ENCODE measurements at regions of chr12 and their contacts with region 1.

Region 1: DNA sequence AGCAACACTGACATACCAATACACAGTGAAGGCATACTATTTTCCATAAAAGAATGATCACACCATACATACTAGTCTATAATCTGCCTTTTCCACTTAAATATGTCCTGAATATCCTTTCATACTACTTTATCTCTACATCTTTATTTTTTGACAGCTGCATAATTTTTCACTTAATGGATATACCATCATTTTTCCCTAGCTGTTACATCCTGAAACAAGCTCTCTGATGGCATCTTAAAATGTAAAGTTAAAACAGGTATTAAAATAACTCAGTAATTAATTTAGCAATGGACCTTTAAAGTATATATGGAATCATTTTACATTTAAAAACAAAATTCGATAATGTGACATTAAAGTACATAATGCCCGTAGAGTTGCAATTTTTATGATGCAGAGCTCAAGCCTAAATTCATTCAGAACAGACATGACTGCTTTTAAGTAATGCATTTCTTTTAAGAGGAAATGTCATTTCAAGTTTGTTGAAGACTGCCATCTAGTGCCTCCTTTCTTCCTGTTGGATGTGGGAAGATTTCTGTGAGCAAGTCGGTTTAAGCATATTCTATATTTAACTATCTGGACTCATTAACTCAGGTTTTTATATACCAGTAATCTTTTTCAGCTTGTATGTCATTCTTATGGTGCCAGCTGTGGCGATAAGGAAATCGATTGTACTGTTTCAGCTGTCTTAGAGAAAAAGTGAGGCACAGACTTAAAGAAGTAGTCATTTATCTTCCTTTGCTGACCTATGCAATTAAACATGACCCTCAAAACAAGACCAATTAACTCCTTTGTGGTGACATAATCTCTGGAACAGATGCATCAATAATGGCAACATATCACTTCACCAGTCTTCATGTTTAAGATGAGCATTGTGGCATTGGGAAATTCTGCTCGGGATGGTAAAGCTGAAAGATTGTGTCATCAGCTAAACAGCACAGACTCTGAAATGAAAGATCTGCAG is 20.3 kb downstream of the PRICKLE1 start:
- DNase-seq: no peak
- ATAC-seq: no peak
- H3K4me3 Mint-ChIP-seq: no peak overlapping the region
- H3K27ac Mint-ChIP-seq: no peak overlapping the region
- H3K4me1 Mint-ChIP-seq: no peaks in the 10 kb centered on the region
- H3K27me3 Mint-ChIP-seq: no peaks in the 10 kb centered on the region
- CTCF ChIP-seq: no peak

Region 2: GRCh38 chr12:40946612-40947194 is 1622.5 kb before region 1 on chr12:
- CTCF ChIA-PET with region 1: no interaction called
- POLR2A ChIA-PET with region 1: no interaction called
- intact Hi-C with region 1: loop called (anchors 1 kb)
- DNase-seq: no peak
- ATAC-seq: peak; percentile 25
- H3K4me3 Mint-ChIP-seq: no peak overlapping the region
- H3K27ac Mint-ChIP-seq: no peak overlapping the region
- H3K4me1 Mint-ChIP-seq: no peaks in the 10 kb centered on the region
- H3K27me3 Mint-ChIP-seq: peaks cover 7% of the 10 kb centered on the region
- CTCF ChIP-seq: no peak

Region 3: DNA sequence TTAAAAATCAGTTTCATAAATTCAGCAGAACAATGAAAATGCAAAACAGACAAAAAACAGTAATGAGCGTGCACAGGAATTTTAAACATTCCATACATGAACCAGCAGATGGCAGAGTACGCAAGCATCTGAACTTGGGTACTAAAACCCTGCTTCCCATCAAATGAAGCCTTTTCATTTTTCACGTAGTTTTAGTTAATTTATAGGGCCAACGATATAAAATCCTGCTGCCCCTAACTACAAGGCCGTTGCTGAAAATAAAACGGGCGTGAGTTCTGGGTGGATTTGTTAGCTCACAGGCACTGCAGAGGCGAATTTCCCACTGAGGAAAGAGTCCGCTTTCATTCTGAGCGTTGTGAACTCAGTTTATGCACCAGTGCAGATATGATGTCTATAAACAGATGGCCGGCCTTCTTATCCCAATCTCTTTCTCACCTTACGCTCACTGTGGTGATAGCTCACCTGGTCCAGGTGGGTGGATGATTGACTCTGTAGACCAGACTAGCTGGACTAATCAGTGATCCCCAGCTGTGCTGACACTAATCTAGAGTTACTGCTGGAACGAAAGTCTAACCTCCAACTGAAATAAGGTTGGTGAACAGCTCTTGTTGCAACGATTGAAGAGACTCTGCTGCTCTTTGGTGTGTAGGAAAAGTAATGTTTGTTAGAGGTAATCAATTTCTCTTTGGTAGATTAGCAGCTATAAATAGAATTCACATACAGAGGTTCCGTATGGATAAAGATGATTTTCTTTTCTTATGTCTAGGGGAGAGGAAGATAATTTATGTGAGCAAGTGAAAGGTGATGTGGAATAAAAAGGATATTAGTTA is 1291.9 kb before region 1 on chr12:
- CTCF ChIA-PET with region 1: interaction called, 4 read pairs
- POLR2A ChIA-PET with region 1: no interaction called
- intact Hi-C with region 1: loop called (anchors 1 kb)
- DNase-seq: no peak
- ATAC-seq: peak; percentile 37
- H3K4me3 Mint-ChIP-seq: no peak overlapping the region
- H3K27ac Mint-ChIP-seq: no peak overlapping the region
- H3K4me1 Mint-ChIP-seq: peaks cover 3% of the 10 kb centered on the region
- H3K27me3 Mint-ChIP-seq: peaks cover 5% of the 10 kb centered on the region
- CTCF ChIP-seq: no peak

Region 4: DNA sequence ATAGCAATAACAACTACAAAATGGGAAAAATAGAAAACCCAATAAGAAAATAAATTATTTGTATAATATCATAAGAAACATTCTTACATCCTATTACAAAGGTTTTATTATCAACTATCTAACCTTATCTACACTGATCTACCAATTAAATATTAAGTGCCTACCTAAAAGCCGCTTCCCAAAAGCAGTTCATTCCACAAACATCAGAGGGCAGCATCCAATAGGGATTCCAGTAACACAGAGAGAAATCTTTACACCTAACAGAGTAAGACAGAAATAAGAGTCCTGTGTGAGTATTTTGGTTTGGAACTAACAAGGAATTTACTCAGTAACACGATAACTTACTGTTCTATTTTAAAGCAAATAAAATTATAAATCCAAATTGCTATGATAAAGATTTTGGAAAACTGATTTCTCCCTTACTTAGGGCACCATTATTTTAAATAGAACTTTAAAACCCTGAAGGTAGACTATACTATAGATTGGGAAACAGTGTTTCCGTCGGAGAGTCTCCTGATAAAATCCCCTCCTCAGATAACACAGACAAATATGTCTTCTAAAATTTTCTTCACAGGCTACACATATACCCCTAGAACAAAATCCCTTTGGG is 439.5 kb before region 1 on chr12:
- CTCF ChIA-PET with region 1: interaction called, 5 read pairs
- POLR2A ChIA-PET with region 1: no interaction called
- intact Hi-C with region 1: loop called (anchors 5 kb)
- DNase-seq: no peak
- ATAC-seq: peak; percentile 52
- H3K4me3 Mint-ChIP-seq: no peak overlapping the region
- H3K27ac Mint-ChIP-seq: no peak overlapping the region
- H3K4me1 Mint-ChIP-seq: peaks cover 15% of the 10 kb centered on the region
- H3K27me3 Mint-ChIP-seq: no peaks in the 10 kb centered on the region
- CTCF ChIP-seq: no peak

Region 5: DNA sequence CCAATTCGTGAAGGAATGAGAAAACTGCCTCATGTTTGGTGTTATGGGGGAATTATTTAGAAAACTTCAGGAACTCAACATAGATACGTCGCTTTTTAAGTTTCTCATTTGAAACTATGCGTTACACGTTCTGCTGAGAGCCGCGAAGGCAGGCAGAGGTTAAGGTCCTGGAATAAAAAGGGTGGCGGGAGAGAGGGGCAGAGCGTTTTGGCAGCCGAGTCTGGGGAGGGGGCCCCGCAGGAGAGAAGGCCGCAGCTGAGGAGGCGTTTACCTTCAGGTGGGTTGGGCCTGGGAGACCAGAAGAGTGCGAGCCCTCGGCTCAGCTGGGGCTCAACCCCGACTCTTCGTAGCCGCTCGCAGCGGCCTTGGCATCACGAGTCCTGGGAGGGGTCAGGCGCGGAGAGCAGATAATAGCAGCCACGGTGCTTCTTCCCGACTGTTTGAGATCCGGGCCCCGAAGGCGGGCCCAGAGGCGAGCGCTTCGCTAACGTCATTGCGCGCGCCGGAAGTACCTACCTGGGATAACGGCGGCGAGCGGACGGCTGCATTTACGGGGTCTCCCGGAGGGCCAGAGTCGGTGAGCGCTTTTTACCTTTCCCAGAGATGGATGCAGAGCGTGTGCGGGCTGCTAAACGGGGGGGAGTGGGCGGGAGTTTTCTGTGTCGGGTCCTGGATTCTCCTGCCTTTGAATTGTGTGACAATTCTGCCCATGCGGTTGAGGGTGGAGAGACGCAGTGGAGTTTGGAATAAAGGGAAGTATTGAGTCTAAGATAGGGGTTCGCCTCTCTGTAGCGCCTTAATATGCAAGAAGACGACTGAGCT is 243.4 kb before region 1 on chr12 and contains the starts of genes PPHLN1 and ZCRB1:
- CTCF ChIA-PET with region 1: no interaction called
- POLR2A ChIA-PET with region 1: no interaction called
- intact Hi-C with region 1: loop called (anchors 5 kb)
- DNase-seq: peak; percentile 73
- ATAC-seq: peak; percentile 89
- H3K4me3 Mint-ChIP-seq: peak within 1 kb of the TSS; percentile 94
- H3K27ac Mint-ChIP-seq: peak within 1 kb of the TSS; percentile 90
- H3K4me1 Mint-ChIP-seq: peaks cover 51% of the 10 kb centered on the region
- H3K27me3 Mint-ChIP-seq: no peaks in the 10 kb centered on the region
- CTCF ChIP-seq: no peak
- total RNA-seq, gene PPHLN1: 94.0 and 95.9 TPM in 2 replicates
- total RNA-seq, gene ZCRB1: 37.4 and 37.6 TPM in 2 replicates

Region 6: DNA sequence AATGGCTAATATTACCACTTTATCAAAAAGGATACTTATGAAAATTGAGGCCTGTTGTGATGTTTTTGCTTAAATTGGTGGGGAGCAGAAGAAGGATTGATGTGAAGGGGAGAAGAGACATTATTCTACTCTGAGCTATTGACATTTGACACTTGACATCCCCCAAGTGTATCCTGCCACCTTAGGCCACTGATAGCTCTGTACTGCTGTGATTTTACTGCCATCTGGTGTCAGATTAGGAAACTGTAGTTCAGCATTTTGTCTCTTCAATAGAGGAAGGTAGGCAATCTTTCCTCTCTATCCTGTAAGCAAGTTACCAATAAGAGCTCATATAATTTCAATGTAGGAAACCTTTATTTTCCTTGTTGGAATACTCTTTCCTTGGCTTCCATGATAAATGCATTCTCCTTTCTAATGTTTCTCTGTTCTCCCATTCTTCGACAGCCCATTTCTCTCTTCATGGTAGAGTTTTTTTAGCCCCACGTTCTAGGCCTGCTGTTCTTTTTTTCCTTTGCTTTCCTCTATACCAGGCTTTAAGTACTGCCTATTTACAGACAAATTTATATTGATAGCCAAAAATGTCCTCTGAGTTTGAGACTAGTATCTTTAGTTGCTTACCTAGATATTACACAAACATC is 197.0 kb before region 1 on chr12:
- CTCF ChIA-PET with region 1: interaction called, 16 read pairs
- POLR2A ChIA-PET with region 1: no interaction called
- intact Hi-C with region 1: loop called (anchors 2 kb)
- DNase-seq: no peak
- ATAC-seq: peak; percentile 94
- H3K4me3 Mint-ChIP-seq: no peak overlapping the region
- H3K27ac Mint-ChIP-seq: no peak overlapping the region
- H3K4me1 Mint-ChIP-seq: peaks cover 16% of the 10 kb centered on the region
- H3K27me3 Mint-ChIP-seq: no peaks in the 10 kb centered on the region
- CTCF ChIP-seq: peak; percentile 30

Region 7: GRCh38 chr12:42603246-42603645 is 34.0 kb after region 1 on chr12:
- CTCF ChIA-PET with region 1: no interaction called
- POLR2A ChIA-PET with region 1: no interaction called
- intact Hi-C with region 1: no loop called
- DNase-seq: no peak
- ATAC-seq: no peak
- H3K4me3 Mint-ChIP-seq: no peak overlapping the region
- H3K27ac Mint-ChIP-seq: no peak overlapping the region
- H3K4me1 Mint-ChIP-seq: no peaks in the 10 kb centered on the region
- H3K27me3 Mint-ChIP-seq: peaks cover 9% of the 10 kb centered on the region
- CTCF ChIP-seq: no peak

Region 8: DNA sequence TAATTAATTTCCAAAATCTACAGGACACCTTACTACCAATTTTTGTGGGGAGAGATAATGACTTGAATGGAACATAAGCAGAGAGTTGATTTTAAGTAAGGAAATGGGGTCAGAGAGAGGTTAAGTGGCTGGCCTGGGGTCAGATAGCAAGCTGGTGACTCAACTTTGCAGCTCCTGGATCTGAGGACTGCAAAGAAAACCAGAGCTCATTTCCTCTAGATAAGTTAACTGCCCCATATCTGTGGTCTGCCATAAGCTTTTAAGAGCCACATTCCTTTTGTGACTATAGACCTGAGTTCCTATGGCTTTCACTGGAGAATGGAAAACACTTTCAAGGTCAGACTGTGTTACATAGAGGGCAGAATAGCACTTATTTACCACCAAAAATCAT is 221.5 kb after region 1 on chr12:
- CTCF ChIA-PET with region 1: no interaction called
- POLR2A ChIA-PET with region 1: no interaction called
- intact Hi-C with region 1: no loop called
- DNase-seq: no peak
- ATAC-seq: no peak
- H3K4me3 Mint-ChIP-seq: no peak overlapping the region
- H3K27ac Mint-ChIP-seq: no peak overlapping the region
- H3K4me1 Mint-ChIP-seq: no peaks in the 10 kb centered on the region
- H3K27me3 Mint-ChIP-seq: no peaks in the 10 kb centered on the region
- CTCF ChIP-seq: no peak